Dorsolateral prefrontal cortex (tissue), 120 donors: ENCODE measurements at regions of chr5 and their contacts with region 1.

Region 1: DNA sequence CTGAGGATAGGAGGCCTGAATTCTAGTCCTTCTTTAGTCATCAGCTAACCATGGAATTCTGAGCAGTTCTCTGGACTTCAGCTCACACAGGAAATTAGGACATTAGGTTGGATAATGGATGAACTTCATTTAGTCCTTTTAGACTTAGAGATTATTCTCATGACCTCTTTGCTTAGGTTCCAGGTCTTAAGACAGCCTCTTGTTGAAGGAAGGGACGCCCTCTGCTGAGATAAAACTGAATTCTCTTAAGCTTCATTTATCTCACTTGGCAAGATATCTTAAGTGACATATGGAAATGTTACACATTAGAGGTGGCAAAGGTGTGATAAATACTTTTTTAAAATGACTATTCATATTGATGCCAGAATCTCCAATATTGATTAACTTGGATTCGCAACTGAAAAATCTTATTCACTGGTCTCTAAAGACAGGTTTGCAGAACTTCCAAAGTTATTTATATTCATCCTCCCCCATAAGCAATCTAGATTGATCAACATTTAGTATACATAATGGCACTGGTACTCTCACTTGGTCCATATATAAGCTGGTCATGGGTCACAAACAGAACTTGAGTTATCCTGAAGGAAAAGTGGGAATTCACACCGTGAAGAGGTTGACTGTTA is 16.9 kb upstream of the ZNF366 start:
- DNase-seq: no peak
- H3K4me3 ChIP-seq: no peak overlapping the region
- H3K27ac ChIP-seq: no peak overlapping the region
- H3K27me3 ChIP-seq: no peaks in the 10 kb centered on the region
- CTCF ChIP-seq: peak in 55 of 56 donors; percentile 38 to 79 (median 61)

Region 2: GRCh38 chr5:72355706-72356299 is 168.3 kb before region 1 on chr5:
- intact Hi-C with region 1: loop called in 1 of 2 experiments (anchors 5 kb)
- DNase-seq: peak in 8 of 10 donors; percentile 31 to 61 (median 44)
- H3K4me3 ChIP-seq: no peak overlapping the region
- H3K27ac ChIP-seq: peak overlapping the region in 38 of 59 donors; percentile 1 to 75 (median 38)
- H3K27me3 ChIP-seq: no peaks in the 10 kb centered on the region
- CTCF ChIP-seq: peak in 54 of 56 donors; percentile 28 to 74 (median 54)

Region 3: DNA sequence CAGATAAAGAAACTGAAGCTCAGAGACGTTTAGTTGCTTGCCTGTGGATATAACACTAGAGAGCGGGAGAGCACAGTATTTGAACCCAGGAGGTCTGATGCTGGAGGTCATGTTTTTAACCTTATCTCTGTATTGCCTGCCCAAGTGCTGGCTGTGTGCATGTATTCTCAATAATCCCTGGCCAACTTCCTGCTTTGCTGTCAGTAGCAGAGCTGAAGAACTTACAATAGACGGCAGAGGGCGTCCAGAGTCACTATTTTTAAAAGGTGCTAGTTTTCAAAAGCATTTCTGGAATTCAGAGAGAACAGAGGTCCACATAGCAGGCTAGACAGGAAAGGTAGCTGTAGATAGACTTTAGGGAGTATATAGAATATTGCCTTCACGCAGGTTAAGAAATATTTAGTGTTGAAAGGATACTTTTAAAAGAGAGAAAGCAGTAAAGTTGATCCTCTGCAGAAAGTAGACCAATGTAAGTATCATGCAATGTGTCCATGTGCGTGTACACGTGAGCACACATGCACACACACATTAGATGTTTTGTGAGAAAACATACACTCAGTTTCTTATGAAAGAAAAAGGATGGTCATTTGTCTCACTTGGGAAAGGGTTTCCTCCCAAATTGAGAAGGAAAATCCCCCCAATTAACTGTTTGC is 157.6 kb before region 1 on chr5:
- intact Hi-C with region 1: loop called (anchors 5 kb)
- DNase-seq: peak in 5 of 10 donors; percentile 48 to 74 (median 54)
- H3K4me3 ChIP-seq: no peak overlapping the region
- H3K27ac ChIP-seq: no peak overlapping the region
- H3K27me3 ChIP-seq: no peaks in the 10 kb centered on the region
- CTCF ChIP-seq: peak; percentile 48 to 87 (median 74)

Region 4: GRCh38 chr5:72451741-72452505 is 72.1 kb before region 1 on chr5:
- intact Hi-C with region 1: no loop called
- DNase-seq: no peak
- H3K4me3 ChIP-seq: peak overlapping the region in 1 of 59 donors; percentile 1
- H3K27ac ChIP-seq: peak overlapping the region in 55 of 59 donors; percentile 6 to 94 (median 78)
- H3K27me3 ChIP-seq: no peaks in the 10 kb centered on the region
- CTCF ChIP-seq: no peak